HEK293 (cell line): ENCODE measurements at regions of chr9 and their contacts with region 1.

Region 1: DNA sequence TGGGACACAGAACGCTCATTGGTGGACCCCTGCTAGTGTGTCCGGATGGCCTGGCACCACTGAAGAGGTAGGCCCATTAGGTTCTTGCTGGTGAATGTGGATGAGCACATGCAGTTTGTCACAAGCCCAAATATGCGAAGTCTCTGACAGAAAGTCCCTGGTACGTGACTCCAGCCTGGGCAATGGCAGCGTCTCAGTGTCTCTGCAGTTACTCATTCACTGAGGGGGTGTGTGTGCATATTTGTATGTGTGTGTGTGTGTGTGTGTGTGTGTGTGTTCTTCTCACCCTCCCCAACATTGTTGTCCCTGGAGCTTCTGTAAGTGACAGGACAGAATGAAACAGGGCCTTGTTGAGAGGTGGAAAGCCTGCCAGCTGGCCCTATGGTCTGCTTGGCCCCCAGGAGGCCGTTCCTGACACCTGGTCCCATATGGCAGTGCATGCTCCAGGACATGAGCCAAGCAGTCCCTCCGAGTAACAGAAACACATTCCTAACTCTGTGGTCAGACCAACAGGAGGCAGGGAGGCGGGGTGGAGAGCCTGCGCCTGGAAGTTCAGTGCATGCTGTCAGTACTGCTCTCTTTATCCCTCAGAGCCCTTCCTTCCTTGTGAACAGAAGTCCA is 169.9 kb downstream of the SLC28A3 start:
- H3K4me3 ChIP-seq: no peak overlapping the region
- H3K27ac ChIP-seq: no peak overlapping the region
- H3K4me1 ChIP-seq: no peaks in the 10 kb centered on the region
- CTCF ChIP-seq: no peak

Region 2: GRCh38 chr9:84123648-84124406 is 46.8 kb before region 1 on chr9:
- CTCF ChIA-PET with region 1: interaction called, 11 read pairs
- POLR2A ChIA-PET with region 1: no interaction called
- H3K4me3 ChIP-seq: no peak overlapping the region
- H3K27ac ChIP-seq: no peak overlapping the region
- H3K4me1 ChIP-seq: peaks cover 18% of the 10 kb centered on the region
- CTCF ChIP-seq: no peak

Region 3: DNA sequence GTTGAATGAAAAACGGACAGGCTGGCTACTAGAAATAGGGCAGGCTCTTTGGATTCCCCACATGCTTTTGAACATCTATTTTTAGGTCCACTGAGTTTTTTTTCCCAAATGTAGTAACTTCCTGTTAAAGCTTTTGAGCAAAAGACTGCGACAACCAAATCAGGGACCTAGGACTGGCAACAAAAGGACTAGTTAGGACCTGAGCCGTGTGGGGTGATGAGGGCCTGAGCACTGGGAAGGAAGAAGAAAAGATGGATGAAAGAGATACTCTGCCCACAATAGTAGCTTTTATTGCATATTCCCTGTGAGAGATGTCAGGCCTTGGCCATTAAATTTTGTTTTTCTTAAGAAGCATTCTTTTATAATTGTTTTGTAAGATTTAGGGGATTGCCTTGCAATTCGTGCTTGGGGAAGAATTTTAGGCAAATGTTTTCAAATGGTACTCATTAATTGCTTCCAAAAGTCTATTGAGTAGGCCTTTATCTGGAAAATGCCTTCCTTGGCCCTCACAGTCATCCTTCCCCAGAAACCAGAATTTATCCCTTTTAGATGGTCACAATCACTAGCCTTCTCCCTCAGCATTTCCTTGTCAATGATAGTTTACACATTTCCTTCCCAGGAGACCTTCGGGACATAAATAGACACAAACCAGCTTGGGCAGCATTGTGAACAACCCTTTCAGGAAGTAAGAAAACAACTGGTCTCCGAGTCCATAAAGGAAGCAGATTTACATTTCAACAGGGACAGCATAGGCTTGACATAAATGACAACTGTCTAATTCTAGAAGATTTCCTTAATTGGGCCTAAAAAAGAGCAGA is 23.5 kb before region 1 on chr9:
- CTCF ChIA-PET with region 1: interaction called, 13 read pairs
- POLR2A ChIA-PET with region 1: no interaction called
- H3K4me3 ChIP-seq: no peak overlapping the region
- H3K27ac ChIP-seq: no peak overlapping the region
- H3K4me1 ChIP-seq: no peaks in the 10 kb centered on the region
- CTCF ChIP-seq: no peak

Region 4: GRCh38 chr9:84187090-84187489 is 16.5 kb after region 1 on chr9:
- CTCF ChIA-PET with region 1: interaction called, 22 read pairs
- POLR2A ChIA-PET with region 1: no interaction called
- H3K4me3 ChIP-seq: no peak overlapping the region
- H3K27ac ChIP-seq: no peak overlapping the region
- H3K4me1 ChIP-seq: no peaks in the 10 kb centered on the region
- CTCF ChIP-seq: no peak